ENCODE measurements at regions of chr5 and their contacts with region 1.

Region 1: GRCh38 chr5:157476702-157477408 is 16.8 kb downstream of the NIPAL4 start:
- DNase-seq: no peak
- ATAC-seq: peak; percentile 72 to 88 (median 79)
- H3K4me3 ChIP-seq: no peak overlapping the region
- H3K27ac ChIP-seq: no peak overlapping the region
- H3K4me1 ChIP-seq: no peaks in the 10 kb centered on the region
- H3K27me3 ChIP-seq: no peaks in the 10 kb centered on the region
- CTCF ChIP-seq: peak; percentile 79

Region 2: GRCh38 chr5:157366741-157367674 is 109.8 kb before region 1 on chr5:
- intact Hi-C with region 1: loop called in 1 of 2 experiments (anchors 5 kb)
- DNase-seq: no peak
- ATAC-seq: peak in 3 of 4 donors; percentile 33 to 70 (median 62)
- H3K4me3 ChIP-seq: no peak overlapping the region
- H3K27ac ChIP-seq: no peak overlapping the region
- H3K4me1 ChIP-seq: peaks cover 5% of the 10 kb centered on the region
- H3K27me3 ChIP-seq: no peaks in the 10 kb centered on the region
- CTCF ChIP-seq: peak; percentile 47

Region 3: GRCh38 chr5:157511651-157512644 is 35.1 kb after region 1 on chr5:
- intact Hi-C with region 1: no loop called
- DNase-seq: peak; percentile 92 to 94
- ATAC-seq: peak; percentile 87 to 93 (median 92)
- H3K4me3 ChIP-seq: no peak overlapping the region
- H3K27ac ChIP-seq: peak overlapping the region; percentile 53
- H3K4me1 ChIP-seq: peaks cover 25% of the 10 kb centered on the region
- H3K27me3 ChIP-seq: no peaks in the 10 kb centered on the region
- CTCF ChIP-seq: no peak